ENCODE measurements at regions of chr6 and their contacts with region 1.

Region 1: GRCh38 chr6:142207265-142207877 is 60.3 kb downstream of the VTA1 start:
- DNase-seq: peak; percentile 34
- ATAC-seq: peak in 1 of 2 donors; percentile 68

Region 2: DNA sequence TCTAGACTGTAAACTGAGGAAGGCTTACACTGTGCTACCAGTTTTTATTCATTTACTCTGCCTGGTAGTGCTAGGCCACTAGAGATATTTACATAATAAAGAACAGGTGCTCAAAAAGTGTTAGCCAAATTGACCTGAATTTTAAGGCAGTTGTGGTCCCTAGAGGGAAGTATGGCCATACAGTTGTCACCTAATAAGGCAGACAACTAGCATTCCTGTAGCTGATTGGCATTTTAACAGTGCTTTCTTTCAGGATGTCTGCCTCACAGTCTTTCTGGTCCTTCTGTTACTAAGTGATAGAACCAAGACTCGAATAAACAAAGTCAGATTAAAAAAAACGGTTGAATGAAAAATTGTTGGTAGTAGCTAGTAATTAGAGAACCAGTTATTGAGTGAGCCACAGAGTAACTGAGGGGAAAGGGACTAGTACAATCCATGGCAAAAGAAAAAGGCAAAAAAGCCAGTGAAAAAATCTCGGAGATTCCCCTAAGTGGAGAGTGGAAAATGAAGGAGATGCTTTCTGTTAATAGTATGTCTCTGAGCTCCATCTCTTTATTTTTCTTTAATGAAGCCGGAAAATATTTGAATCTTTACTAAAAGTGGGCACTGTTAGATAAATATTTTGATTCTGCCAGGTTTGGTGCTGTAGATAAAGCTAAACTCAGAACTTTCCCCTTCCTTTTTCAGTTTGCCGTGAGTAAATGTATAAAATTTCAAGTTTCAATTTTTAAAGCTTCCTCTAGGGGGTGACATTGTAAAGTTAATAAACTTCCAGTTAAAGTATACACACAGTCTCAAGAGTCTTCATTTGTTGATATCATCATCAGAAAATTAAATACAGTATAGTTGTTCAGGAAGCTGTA is 51.2 kb before region 1 on chr6:
- intact Hi-C with region 1: loop called in 1 of 2 experiments (anchors 10 kb)
- DNase-seq: no peak
- ATAC-seq: peak in 1 of 2 donors; percentile 47

Region 3: DNA sequence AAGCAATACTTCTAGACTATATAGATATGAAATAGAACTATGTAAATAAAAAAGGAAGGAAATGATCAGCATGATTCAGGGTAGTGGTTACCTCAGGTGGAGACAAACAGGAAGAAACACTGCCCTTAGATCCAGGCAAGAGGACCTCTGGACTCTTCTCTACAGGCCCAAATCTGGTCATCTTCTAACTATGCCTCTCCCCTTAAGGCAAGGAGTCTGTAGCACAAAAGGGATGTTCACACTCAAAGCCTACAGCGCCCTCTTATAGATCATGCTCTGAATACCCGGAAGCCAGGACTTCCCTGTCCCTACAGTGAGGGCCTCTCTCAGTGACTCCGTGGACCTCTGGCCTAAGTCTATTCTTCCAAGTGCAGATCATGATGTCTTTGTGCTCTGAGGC is 768.0 kb after region 1 on chr6:
- intact Hi-C with region 1: no loop called
- DNase-seq: no peak
- ATAC-seq: no peak